Activated CD8-positive, alpha-beta T cell treated with anti-CD3 and anti-CD28 coated beads for 36 hours (primary cell): ENCODE measurements at regions of chrX and their contacts with region 1.

Region 1: GRCh38 chrX:19334945-19335626 is 8.6 kb upstream of the PDHA1 start:
- DNase-seq: peak; percentile 54
- ATAC-seq: peak; percentile 74
- H3K4me3 Mint-ChIP-seq: no peak overlapping the region
- H3K27ac Mint-ChIP-seq: no peak overlapping the region
- H3K4me1 Mint-ChIP-seq: no peaks in the 10 kb centered on the region
- H3K27me3 Mint-ChIP-seq: no peaks in the 10 kb centered on the region
- CTCF ChIP-seq: peak; percentile 53

Region 2: GRCh38 chrX:18390941-18391538 is 944.0 kb before region 1 on chrX:
- CTCF ChIA-PET with region 1: interaction called, 6 read pairs
- POLR2A ChIA-PET with region 1: no interaction called
- intact Hi-C with region 1: loop called (anchors 2 kb)
- DNase-seq: peak; percentile 74
- ATAC-seq: no peak
- H3K4me3 Mint-ChIP-seq: no peak overlapping the region
- H3K27ac Mint-ChIP-seq: no peak overlapping the region
- H3K4me1 Mint-ChIP-seq: no peaks in the 10 kb centered on the region
- H3K27me3 Mint-ChIP-seq: no peaks in the 10 kb centered on the region
- CTCF ChIP-seq: peak; percentile 54

Region 3: GRCh38 chrX:18931972-18932371 is 403.1 kb before region 1 on chrX:
- CTCF ChIA-PET with region 1: interaction called, 6 read pairs
- POLR2A ChIA-PET with region 1: no interaction called
- intact Hi-C with region 1: loop called (anchors 5 kb)
- DNase-seq: peak; percentile 2
- ATAC-seq: no peak
- H3K4me3 Mint-ChIP-seq: no peak overlapping the region
- H3K27ac Mint-ChIP-seq: no peak overlapping the region
- H3K4me1 Mint-ChIP-seq: no peaks in the 10 kb centered on the region
- H3K27me3 Mint-ChIP-seq: no peaks in the 10 kb centered on the region
- CTCF ChIP-seq: no peak

Region 4: GRCh38 chrX:19040373-19040772 is 294.7 kb before region 1 on chrX:
- CTCF ChIA-PET with region 1: interaction called, 20 read pairs
- POLR2A ChIA-PET with region 1: no interaction called
- intact Hi-C with region 1: no loop called
- DNase-seq: no peak
- ATAC-seq: no peak
- H3K4me3 Mint-ChIP-seq: no peak overlapping the region
- H3K27ac Mint-ChIP-seq: no peak overlapping the region
- H3K4me1 Mint-ChIP-seq: no peaks in the 10 kb centered on the region
- H3K27me3 Mint-ChIP-seq: no peaks in the 10 kb centered on the region
- CTCF ChIP-seq: peak; percentile 40